ENCODE measurements at regions of chr5 and their contacts with region 1.

Region 1: DNA sequence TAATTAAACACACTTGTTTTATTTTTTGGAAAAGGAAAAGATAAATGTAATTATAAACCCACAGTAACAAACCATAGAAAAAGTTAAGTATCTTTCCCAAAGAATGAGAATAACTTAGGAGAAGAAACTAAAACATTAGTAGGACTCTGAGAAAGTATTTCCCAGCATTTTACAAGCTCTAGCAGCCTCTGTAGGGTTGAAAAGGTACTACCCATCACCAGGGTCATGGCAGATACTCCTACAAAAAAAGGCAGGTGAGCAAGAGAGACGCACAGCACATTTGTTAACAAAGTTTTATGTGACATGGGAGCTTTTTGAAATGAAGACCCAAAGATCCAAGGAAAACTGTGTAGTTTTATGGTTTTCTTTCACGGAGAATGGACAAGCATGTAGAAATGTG is 77.7 kb upstream of the FAM169A start:
- DNase-seq: no peak
- H3K4me3 ChIP-seq: no peak overlapping the region
- H3K27ac ChIP-seq: no peak overlapping the region
- H3K4me1 ChIP-seq: peaks cover 7% of the 10 kb centered on the region
- H3K27me3 ChIP-seq: no peaks in the 10 kb centered on the region
- CTCF ChIP-seq: no peak
- POLR2A ChIP-seq: no peak

Region 2: GRCh38 chr5:72951671-72952468 is 1992.0 kb before region 1 on chr5:
- intact Hi-C with region 1: loop called (anchors 5 kb)
- DNase-seq: no peak
- H3K4me3 ChIP-seq: no peak overlapping the region
- H3K27ac ChIP-seq: peak overlapping the region; percentile 4
- H3K4me1 ChIP-seq: no peaks in the 10 kb centered on the region
- H3K27me3 ChIP-seq: no peaks in the 10 kb centered on the region
- CTCF ChIP-seq: no peak
- POLR2A ChIP-seq: no peak

Region 3: GRCh38 chr5:74517700-74518099 is 426.2 kb before region 1 on chr5:
- intact Hi-C with region 1: no loop called
- DNase-seq: no peak
- H3K4me3 ChIP-seq: no peak overlapping the region
- H3K27ac ChIP-seq: no peak overlapping the region
- H3K4me1 ChIP-seq: no peaks in the 10 kb centered on the region
- H3K27me3 ChIP-seq: no peaks in the 10 kb centered on the region
- CTCF ChIP-seq: no peak
- POLR2A ChIP-seq: no peak

Region 4: DNA sequence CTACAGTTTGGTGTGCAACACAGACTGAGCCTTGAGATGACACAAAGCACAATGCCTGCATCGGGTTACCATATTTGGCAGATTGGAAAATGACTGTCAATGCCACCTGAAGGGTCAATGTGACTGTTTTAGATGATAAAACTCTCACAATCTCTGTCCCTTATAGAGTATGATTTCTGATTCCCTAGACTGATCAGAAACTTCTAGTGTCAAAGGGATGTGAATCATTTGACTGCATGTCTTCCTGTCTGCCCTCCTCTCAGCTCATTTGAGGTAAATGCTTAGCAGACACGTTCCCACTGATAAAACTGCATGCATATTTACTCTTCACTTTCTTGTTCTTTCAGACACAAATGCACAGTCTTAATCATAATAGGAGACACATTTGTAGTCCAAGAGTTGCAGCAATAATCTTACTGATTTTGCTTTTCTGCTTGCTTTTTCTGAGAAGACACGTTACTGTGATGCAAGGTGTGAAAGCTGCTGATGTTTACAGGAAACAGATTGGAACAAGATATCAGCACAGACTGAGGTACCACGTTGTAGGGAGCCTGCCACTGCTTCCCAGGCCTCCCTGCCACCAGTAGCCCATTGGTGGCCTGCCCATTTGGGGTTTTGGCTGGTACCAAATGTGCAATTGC is 30.7 kb after region 1 on chr5:
- intact Hi-C with region 1: no loop called
- DNase-seq: no peak
- H3K4me3 ChIP-seq: no peak overlapping the region
- H3K27ac ChIP-seq: no peak overlapping the region
- H3K4me1 ChIP-seq: no peaks in the 10 kb centered on the region
- H3K27me3 ChIP-seq: no peaks in the 10 kb centered on the region
- CTCF ChIP-seq: no peak
- POLR2A ChIP-seq: no peak